Endothelial cell of umbilical vein (primary cell): ENCODE measurements at regions of chr1 and their contacts with region 1.

Region 1: GRCh38 chr1:6205849-6206519 is at the start of gene RNF207:
- DNase-seq: peak; percentile 18
- H3K4me3 ChIP-seq: peak within 1 kb of the TSS; percentile 23 to 59 (median 38)
- H3K27ac ChIP-seq: peak within 1 kb of the TSS; percentile 43
- H3K4me1 ChIP-seq: peaks cover 22% of the 10 kb centered on the region
- H3K27me3 ChIP-seq: peaks cover 6 to 11% of the 10 kb centered on the region in 2 experiments
- CTCF ChIP-seq: no peak
- POLR2A ChIP-seq: no peak
- total RNA-seq, gene RNF207: 2.4 and 8.2 TPM in 2 replicates

Region 2: GRCh38 chr1:6108937-6109614 is 96.9 kb before region 1 on chr1:
- CTCF ChIA-PET with region 1: interaction called, 12 read pairs
- POLR2A ChIA-PET with region 1: no interaction called
- dilution Hi-C with region 1: no loop called
- intact Hi-C with region 1: no loop called
- DNase-seq: peak; percentile 39
- H3K4me3 ChIP-seq: no peak overlapping the region
- H3K27ac ChIP-seq: no peak overlapping the region
- H3K4me1 ChIP-seq: no peaks in the 10 kb centered on the region
- H3K27me3 ChIP-seq: no peaks in the 10 kb centered on the region
- CTCF ChIP-seq: peak; percentile 35 to 77
- POLR2A ChIP-seq: no peak

Region 3: GRCh38 chr1:6235296-6235677 is 29.3 kb after region 1 on chr1:
- CTCF ChIA-PET with region 1: interaction called, 30 read pairs
- POLR2A ChIA-PET with region 1: no interaction called
- dilution Hi-C with region 1: no loop called
- intact Hi-C with region 1: loop called (anchors 1 kb)
- DNase-seq: no peak
- H3K4me3 ChIP-seq: peak overlapping the region; percentile 66 to 80 (median 68)
- H3K27ac ChIP-seq: peak overlapping the region; percentile 6
- H3K4me1 ChIP-seq: peaks cover 11% of the 10 kb centered on the region
- H3K27me3 ChIP-seq: peaks cover 8 to 9% of the 10 kb centered on the region in 2 experiments
- CTCF ChIP-seq: no peak
- POLR2A ChIP-seq: no peak

Region 4: GRCh38 chr1:6393400-6394187 is 187.6 kb after region 1 on chr1 and contains the start of gene ACOT7:
- CTCF ChIA-PET with region 1: interaction called, 3 read pairs
- POLR2A ChIA-PET with region 1: no interaction called
- dilution Hi-C with region 1: no loop called
- intact Hi-C with region 1: loop called (anchors 2 kb)
- DNase-seq: peak; percentile 89
- H3K4me3 ChIP-seq: peak within 1 kb of the TSS; percentile 45 to 71 (median 63)
- H3K27ac ChIP-seq: peak within 1 kb of the TSS; percentile 57
- H3K4me1 ChIP-seq: peaks cover 16% of the 10 kb centered on the region
- H3K27me3 ChIP-seq: no peaks in the 10 kb centered on the region
- CTCF ChIP-seq: peak in 1 of 2 donors; percentile 24
- POLR2A ChIP-seq: peak; percentile 44
- total RNA-seq, gene ACOT7: 69.4 and 76.5 TPM in 2 replicates

Region 5: DNA sequence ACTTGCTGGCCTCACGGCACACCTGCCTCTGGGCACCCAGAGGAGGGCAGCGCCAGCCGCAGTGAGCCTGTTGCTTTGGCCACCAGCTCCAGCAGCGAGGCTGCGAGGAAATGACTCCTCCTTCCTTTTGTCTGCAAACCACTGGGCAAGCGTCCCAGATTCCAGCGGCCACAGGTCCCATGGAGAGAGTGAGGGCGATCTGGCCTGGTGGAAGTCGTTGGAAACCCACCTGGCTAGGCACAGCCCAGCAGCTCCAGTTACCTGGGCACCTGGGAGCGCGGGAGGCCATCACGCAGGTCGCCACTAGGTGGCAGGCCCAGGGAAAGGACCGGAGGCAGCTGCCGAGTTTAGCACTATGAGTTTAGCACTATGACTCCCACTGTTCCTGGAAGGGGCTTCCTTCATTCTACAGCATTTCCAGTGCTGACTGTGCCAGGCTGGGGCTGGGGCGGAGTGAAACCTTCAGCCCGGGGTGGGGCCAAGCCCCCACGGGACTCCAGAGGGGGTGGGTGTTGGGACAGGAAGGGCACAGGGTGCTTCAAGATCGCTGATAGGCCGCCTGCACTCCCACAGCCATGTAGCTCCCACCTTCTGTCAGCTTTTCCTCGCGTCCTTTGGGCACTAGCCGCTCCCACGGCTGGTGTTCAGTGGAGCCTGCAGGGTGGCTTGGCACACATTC is 217.5 kb after region 1 on chr1:
- CTCF ChIA-PET with region 1: interaction called, 6 read pairs
- POLR2A ChIA-PET with region 1: no interaction called
- dilution Hi-C with region 1: no loop called
- intact Hi-C with region 1: loop called (anchors 1 kb)
- DNase-seq: peak; percentile 75
- H3K4me3 ChIP-seq: peak overlapping the region in 1 of 3 experiments; percentile 9
- H3K27ac ChIP-seq: peak overlapping the region; percentile 83
- H3K4me1 ChIP-seq: peaks cover 35% of the 10 kb centered on the region
- H3K27me3 ChIP-seq: peaks cover 0 to 7% of the 10 kb centered on the region in 2 experiments
- CTCF ChIP-seq: peak; percentile 49 to 73
- POLR2A ChIP-seq: peak; percentile 31

Region 6: DNA sequence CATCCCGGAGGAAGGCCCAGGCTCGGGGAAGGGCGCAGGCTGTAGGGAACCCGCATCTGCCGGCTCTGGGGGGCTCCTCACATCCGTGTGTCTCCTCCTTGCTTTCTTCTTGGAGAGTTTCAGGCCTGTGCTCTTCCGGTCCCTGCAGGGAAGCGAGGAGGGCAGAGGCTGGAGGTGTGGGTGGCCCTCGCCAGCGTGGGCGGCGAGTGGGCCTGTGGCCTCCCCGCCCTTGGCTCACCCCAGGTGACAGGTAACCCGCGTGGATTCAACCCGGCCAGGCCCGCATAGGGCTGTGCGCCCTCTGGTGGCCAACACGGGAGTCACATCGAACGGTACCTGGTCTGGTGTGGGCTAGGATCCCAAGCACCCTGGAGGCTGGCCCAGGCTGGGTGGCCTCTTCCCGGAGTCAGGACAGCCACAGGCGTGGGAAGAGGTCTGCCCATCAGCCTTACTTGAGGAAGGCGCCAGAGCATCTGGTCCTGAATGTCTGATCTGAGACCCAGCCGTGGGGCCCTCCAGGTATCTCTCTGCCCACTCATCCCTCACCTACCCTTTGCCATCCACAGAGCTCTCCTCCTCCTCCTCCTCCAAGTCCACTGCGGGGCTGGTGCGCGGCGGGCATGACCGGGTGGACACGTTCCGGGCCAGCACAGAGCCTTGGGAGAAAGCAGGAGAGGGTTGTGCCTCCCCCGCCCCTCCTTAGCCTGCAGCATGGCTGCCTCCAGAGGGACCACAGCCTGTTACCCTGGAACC is 269.6 kb after region 1 on chr1:
- CTCF ChIA-PET with region 1: no interaction called
- POLR2A ChIA-PET with region 1: no interaction called
- dilution Hi-C with region 1: no loop called
- intact Hi-C with region 1: no loop called
- DNase-seq: no peak
- H3K4me3 ChIP-seq: no peak overlapping the region
- H3K27ac ChIP-seq: no peak overlapping the region
- H3K4me1 ChIP-seq: no peaks in the 10 kb centered on the region
- H3K27me3 ChIP-seq: no peaks in the 10 kb centered on the region
- CTCF ChIP-seq: peak; percentile 93 to 95
- POLR2A ChIP-seq: no peak